ENCODE measurements at regions of chr10 and their contacts with region 1.

Region 1: GRCh38 chr10:17029581-17030271 is 99.9 kb downstream of the CUBN start:
- DNase-seq: peak; percentile 97
- ATAC-seq: peak; percentile 32
- H3K4me3 Mint-ChIP-seq: peak overlapping the region; percentile 71
- H3K27ac Mint-ChIP-seq: peak overlapping the region; percentile 94
- H3K4me1 Mint-ChIP-seq: peaks cover 82% of the 10 kb centered on the region
- H3K27me3 Mint-ChIP-seq: no peaks in the 10 kb centered on the region
- CTCF ChIP-seq: no peak

Region 2: DNA sequence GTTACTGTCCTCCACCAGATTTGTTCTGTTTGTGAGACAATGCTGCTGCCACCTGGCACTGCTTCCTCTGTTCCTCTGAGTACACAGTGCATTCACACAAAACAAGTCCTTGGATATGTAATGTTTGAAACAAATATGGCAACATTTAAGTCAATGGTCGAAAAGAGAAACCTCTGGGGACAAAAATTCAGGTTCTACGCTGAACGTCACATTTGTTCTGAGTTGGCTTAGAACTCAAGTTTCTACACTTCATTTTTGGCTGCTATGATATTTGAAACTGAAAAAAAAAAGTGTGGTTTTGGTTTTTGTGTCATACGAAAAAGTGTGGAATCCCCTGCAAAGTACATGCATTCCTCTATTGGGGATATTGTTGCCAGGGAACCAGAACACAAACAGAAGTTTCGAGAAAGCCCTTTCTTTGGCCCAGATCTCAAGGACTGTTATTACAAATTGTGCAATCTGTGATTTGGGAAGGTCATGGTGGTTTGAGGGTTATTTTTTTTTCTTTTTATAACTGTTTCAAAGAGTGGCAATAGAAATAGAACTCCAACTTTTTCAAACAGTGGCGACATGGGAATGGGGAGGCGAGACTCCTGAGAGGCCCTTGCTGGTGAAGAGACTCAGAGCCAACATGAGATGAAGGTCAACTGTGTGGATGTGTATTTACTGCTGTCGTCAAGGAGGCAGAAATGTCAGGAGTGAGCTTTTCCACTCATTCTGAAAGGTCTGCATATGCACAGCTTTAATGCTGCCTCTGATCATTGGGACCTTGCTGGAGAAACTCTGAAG is 27.6 kb before region 1 on chr10:
- CTCF ChIA-PET with region 1: interaction called, 9 read pairs
- POLR2A ChIA-PET with region 1: interaction called, 12 read pairs
- intact Hi-C with region 1: loop called (anchors 1 kb)
- DNase-seq: peak; percentile 47
- ATAC-seq: peak; percentile 57
- H3K4me3 Mint-ChIP-seq: peak overlapping the region; percentile 33
- H3K27ac Mint-ChIP-seq: peak overlapping the region; percentile 93
- H3K4me1 Mint-ChIP-seq: peaks cover 52% of the 10 kb centered on the region
- H3K27me3 Mint-ChIP-seq: peaks cover 4% of the 10 kb centered on the region
- CTCF ChIP-seq: no peak

Region 3: GRCh38 chr10:17059197-17059688 is 29.5 kb after region 1 on chr10:
- CTCF ChIA-PET with region 1: no interaction called
- POLR2A ChIA-PET with region 1: no interaction called
- intact Hi-C with region 1: no loop called
- DNase-seq: no peak
- ATAC-seq: no peak
- H3K4me3 Mint-ChIP-seq: no peak overlapping the region
- H3K27ac Mint-ChIP-seq: peak overlapping the region; percentile 12
- H3K4me1 Mint-ChIP-seq: peaks cover 32% of the 10 kb centered on the region
- H3K27me3 Mint-ChIP-seq: no peaks in the 10 kb centered on the region
- CTCF ChIP-seq: no peak

Region 4: GRCh38 chr10:17144757-17145156 is 115.0 kb after region 1 on chr10:
- CTCF ChIA-PET with region 1: interaction called, 3 read pairs
- POLR2A ChIA-PET with region 1: interaction called, 4 read pairs
- intact Hi-C with region 1: loop called (anchors 5 kb)
- DNase-seq: peak; percentile 84
- ATAC-seq: peak; percentile 90
- H3K4me3 Mint-ChIP-seq: no peak overlapping the region
- H3K27ac Mint-ChIP-seq: peak overlapping the region; percentile 62
- H3K4me1 Mint-ChIP-seq: peaks cover 26% of the 10 kb centered on the region
- H3K27me3 Mint-ChIP-seq: no peaks in the 10 kb centered on the region
- CTCF ChIP-seq: no peak